Common myeloid progenitor, CD34-positive (primary cell): ENCODE measurements at regions of chr18 and their contacts with region 1.

Region 1: DNA sequence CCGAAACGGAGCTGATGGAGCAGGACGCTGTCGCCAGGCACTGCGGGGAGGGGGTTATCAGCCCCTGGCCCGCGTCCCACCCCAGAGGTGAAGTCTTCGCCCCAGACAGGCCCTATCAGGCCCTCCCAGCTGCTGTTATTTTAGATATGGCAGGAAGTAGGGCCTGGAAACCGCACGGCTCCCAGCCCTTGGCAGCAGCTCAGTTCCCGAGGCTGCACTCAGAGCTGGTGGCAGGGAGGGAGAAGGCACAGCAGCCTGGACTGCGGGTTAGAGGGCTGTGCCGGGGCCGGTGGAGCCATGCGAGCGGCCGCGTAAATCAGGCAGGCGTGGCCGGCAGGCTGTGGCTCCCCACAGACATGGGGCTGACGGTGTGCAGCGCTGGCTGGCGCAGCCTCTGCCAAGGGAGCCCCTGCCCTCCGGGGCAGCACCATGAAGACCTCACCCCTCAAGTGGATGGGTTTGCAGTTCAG is 111.4 kb downstream of the NFATC1 start:
- DNase-seq: peak; percentile 92 to 98 (median 96)
- H3K4me3 ChIP-seq: peak overlapping the region in 6 of 7 experiments; percentile 39 to 76 (median 57)
- H3K27ac ChIP-seq: peak overlapping the region; percentile 50 to 70
- H3K4me1 ChIP-seq: peaks cover 8 to 73% (median 69%) of the 10 kb centered on the region in 4 experiments
- H3K27me3 ChIP-seq: no peaks in the 10 kb centered on the region

Region 2: GRCh38 chr18:79517341-79517740 is 10.2 kb after region 1 on chr18:
- CTCF ChIA-PET with region 1: interaction called, 19 read pairs
- POLR2A ChIA-PET with region 1: interaction called, 23 read pairs
- DNase-seq: peak in 1 of 3 donors; percentile 22
- H3K4me3 ChIP-seq: no peak overlapping the region
- H3K27ac ChIP-seq: no peak overlapping the region
- H3K4me1 ChIP-seq: peaks cover 0 to 41% (median 29%) of the 10 kb centered on the region in 4 experiments
- H3K27me3 ChIP-seq: no peaks in the 10 kb centered on the region

Region 3: GRCh38 chr18:79523736-79524180 is 16.6 kb after region 1 on chr18:
- CTCF ChIA-PET with region 1: interaction called, 19 read pairs
- POLR2A ChIA-PET with region 1: interaction called, 23 read pairs
- DNase-seq: peak; percentile 91 to 95 (median 94)
- H3K4me3 ChIP-seq: peak overlapping the region in 5 of 7 experiments; percentile 19 to 55 (median 49)
- H3K27ac ChIP-seq: peak overlapping the region in 1 of 2 experiments; percentile 43
- H3K4me1 ChIP-seq: peaks cover 6 to 65% (median 45%) of the 10 kb centered on the region in 4 experiments
- H3K27me3 ChIP-seq: no peaks in the 10 kb centered on the region

Region 4: GRCh38 chr18:79588636-79589481 is 81.7 kb after region 1 on chr18:
- CTCF ChIA-PET with region 1: no interaction called
- POLR2A ChIA-PET with region 1: no interaction called
- DNase-seq: peak; percentile 5 to 57 (median 52)
- H3K4me3 ChIP-seq: no peak overlapping the region
- H3K27ac ChIP-seq: no peak overlapping the region
- H3K4me1 ChIP-seq: peaks cover 0 to 2% (median 0%) of the 10 kb centered on the region in 4 experiments
- H3K27me3 ChIP-seq: no peaks in the 10 kb centered on the region